ENCODE measurements at regions of chr12 and their contacts with region 1.

Region 1: DNA sequence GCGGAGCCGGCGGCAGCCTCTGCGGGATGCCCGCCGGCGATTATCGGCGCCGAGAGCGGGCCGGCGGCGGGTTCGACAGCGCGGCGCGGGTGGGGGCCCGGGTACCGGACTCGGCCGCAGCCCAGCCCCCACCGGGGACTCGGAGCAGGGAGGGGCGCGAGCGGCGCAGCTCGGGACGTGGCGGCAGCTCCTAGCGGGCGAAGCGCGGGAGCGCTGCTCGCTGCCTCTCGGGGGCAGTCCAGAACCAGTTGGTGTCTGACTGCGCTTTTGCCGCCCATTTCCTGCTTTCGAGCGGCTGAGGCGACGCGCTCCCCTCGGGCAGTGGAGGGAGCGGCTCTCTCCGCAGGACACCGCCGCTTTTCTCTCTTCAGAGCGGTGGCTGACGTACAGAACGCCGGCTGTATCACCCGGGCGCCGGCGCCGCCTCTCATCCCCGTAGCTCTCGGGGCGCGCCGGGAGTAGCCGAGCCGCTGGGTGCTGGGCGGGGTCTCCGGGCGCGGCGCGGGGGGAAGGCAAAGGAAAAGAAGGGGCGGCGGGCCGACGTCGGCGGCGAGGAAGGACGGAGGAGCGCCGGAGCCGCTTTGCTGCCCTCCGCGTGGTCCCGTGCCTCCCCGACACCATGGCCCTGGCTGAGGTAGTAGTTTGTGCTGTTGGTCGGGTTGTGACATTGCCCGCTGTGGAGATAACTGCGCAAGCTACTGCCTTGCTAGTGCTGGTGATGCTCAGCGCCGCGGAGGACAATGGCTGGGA is 136.6 kb downstream of the MON2 start:
- DNase-seq: peak; percentile 77
- H3K4me3 ChIP-seq: peak overlapping the region; percentile 81
- CTCF ChIP-seq: peak; percentile 51

Region 2: DNA sequence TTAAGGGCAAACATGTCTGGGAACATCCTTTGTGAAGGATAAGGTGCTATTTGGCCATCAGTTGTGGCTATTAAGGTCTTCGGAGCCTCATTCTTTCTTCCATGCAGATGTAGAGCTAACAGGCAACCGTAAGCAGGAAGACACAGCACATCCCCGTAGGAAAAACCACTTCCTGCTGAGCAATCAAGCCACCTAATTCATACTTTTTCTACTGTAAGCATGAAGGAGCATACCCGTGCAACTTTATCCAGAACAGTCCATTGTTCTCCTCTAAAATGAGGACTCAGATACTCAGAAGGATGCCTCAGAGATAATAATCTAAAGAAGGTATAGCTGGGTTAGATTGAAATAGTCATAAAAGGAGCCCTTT is 99.8 kb after region 1 on chr12:
- in situ Hi-C with region 1: loop called (anchors 10 kb)
- DNase-seq: no peak
- H3K4me3 ChIP-seq: no peak overlapping the region
- CTCF ChIP-seq: no peak

Region 3: DNA sequence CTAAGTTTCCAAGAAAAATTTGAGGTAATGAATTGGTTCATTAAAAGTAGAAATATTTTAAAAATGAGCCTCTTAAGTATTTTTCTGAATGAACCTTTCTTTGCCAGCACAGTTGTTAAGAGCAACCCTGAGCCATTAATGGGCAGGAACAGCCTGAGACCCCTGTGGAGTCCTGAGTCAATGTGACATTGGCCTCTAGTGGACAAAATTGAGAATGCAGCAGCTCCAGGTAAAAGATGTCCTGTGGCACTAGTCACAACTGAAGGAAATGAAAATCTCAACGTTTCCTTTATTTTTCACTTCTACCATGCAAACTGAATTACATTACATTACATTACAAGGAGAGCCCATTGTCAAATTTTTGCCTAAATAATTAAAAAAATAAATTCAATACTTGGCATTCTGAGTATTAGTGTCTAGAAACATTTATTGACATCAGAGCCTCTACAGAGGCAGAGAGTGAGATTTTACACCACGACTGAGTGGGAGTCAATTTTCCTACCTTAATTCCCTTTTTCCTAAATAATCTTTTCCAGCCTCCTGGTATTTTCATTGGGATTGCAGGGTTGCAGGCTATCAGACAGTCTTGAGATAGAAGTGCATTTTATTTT is 196.0 kb after region 1 on chr12:
- in situ Hi-C with region 1: loop called (anchors 10 kb)
- DNase-seq: peak; percentile 80
- H3K4me3 ChIP-seq: no peak overlapping the region
- CTCF ChIP-seq: peak; percentile 96

Region 4: GRCh38 chr12:63068857-63069442 is 465.7 kb after region 1 on chr12:
- in situ Hi-C with region 1: loop called (anchors 25 kb)
- DNase-seq: peak; percentile 75
- H3K4me3 ChIP-seq: no peak overlapping the region
- CTCF ChIP-seq: peak; percentile 58